ENCODE measurements at regions of chr5 and their contacts with region 1.

Region 1: GRCh38 chr5:50744776-50745175 is 78.3 kb downstream of the PARP8 start:
- DNase-seq: peak in 1 of 2 donors; percentile 54
- ATAC-seq: peak; percentile 68 to 73 (median 70)
- H3K4me3 ChIP-seq: peak overlapping the region; percentile 19
- H3K4me3 Mint-ChIP-seq: peak overlapping the region; percentile 85
- H3K27ac ChIP-seq: peak overlapping the region; percentile 59
- H3K27ac Mint-ChIP-seq: peak overlapping the region; percentile 75 to 86
- H3K4me1 ChIP-seq: peaks cover 12% of the 10 kb centered on the region
- H3K4me1 Mint-ChIP-seq: peaks cover 73 to 87% of the 10 kb centered on the region in 2 donors
- H3K27me3 ChIP-seq: no peaks in the 10 kb centered on the region
- H3K27me3 Mint-ChIP-seq: no peaks in the 10 kb centered on the region
- CTCF ChIP-seq: no peak

Region 2: GRCh38 chr5:50564079-50564478 is 180.7 kb before region 1 on chr5:
- intact Hi-C with region 1: loop called (anchors 10 kb)
- DNase-seq: peak in 1 of 2 donors; percentile 71
- ATAC-seq: peak; percentile 94 to 98 (median 94)
- H3K4me3 ChIP-seq: no peak overlapping the region
- H3K4me3 Mint-ChIP-seq: peak overlapping the region; percentile 64
- H3K27ac ChIP-seq: peak overlapping the region; percentile 85
- H3K27ac Mint-ChIP-seq: peak overlapping the region; percentile 84 to 86
- H3K4me1 ChIP-seq: peaks cover 4% of the 10 kb centered on the region
- H3K4me1 Mint-ChIP-seq: peaks cover 31 to 50% of the 10 kb centered on the region in 2 donors
- H3K27me3 ChIP-seq: no peaks in the 10 kb centered on the region
- H3K27me3 Mint-ChIP-seq: no peaks in the 10 kb centered on the region
- CTCF ChIP-seq: no peak

Region 3: DNA sequence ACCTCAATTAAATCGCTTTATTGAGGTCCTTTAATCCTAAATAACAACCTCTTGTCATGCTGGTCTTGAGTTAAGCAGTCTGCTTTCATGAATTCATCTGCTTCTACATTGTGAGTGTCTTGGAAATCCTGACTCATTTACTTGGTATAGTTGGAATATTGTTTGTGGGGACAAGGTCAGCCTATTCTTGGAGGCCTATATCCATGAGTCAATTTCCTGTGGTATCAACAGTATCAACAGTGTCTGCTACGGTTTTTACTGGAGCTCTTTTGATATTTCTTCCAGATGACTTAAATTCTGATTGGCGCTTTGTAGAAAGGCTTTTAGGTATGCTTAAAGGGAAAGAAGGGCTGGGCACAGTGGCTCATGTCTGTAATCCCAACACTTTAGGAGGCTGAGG is 149.6 kb before region 1 on chr5:
- intact Hi-C with region 1: loop called (anchors 5 kb)
- DNase-seq: no peak
- ATAC-seq: peak in 1 of 3 donors; percentile 44
- H3K4me3 ChIP-seq: no peak overlapping the region
- H3K4me3 Mint-ChIP-seq: peak overlapping the region; percentile 45
- H3K27ac ChIP-seq: peak overlapping the region; percentile 38
- H3K27ac Mint-ChIP-seq: peak overlapping the region; percentile 82 to 84
- H3K4me1 ChIP-seq: peaks cover 27% of the 10 kb centered on the region
- H3K4me1 Mint-ChIP-seq: peaks cover 73 to 75% of the 10 kb centered on the region in 2 donors
- H3K27me3 ChIP-seq: no peaks in the 10 kb centered on the region
- H3K27me3 Mint-ChIP-seq: no peaks in the 10 kb centered on the region
- CTCF ChIP-seq: no peak

Region 4: GRCh38 chr5:50667653-50668595 is 76.9 kb before region 1 on chr5:
- intact Hi-C with region 1: loop called (anchors 2 kb)
- DNase-seq: peak; percentile 87 to 94
- ATAC-seq: peak; percentile 68 to 80 (median 79)
- H3K4me3 ChIP-seq: peak overlapping the region; percentile 96
- H3K4me3 Mint-ChIP-seq: peak overlapping the region; percentile 96
- H3K27ac ChIP-seq: peak overlapping the region; percentile 99
- H3K27ac Mint-ChIP-seq: peak overlapping the region; percentile 99 to 100
- H3K4me1 ChIP-seq: peaks cover 27% of the 10 kb centered on the region
- H3K4me1 Mint-ChIP-seq: peaks cover 61 to 62% of the 10 kb centered on the region in 2 donors
- H3K27me3 ChIP-seq: no peaks in the 10 kb centered on the region
- H3K27me3 Mint-ChIP-seq: no peaks in the 10 kb centered on the region
- CTCF ChIP-seq: no peak

Region 5: DNA sequence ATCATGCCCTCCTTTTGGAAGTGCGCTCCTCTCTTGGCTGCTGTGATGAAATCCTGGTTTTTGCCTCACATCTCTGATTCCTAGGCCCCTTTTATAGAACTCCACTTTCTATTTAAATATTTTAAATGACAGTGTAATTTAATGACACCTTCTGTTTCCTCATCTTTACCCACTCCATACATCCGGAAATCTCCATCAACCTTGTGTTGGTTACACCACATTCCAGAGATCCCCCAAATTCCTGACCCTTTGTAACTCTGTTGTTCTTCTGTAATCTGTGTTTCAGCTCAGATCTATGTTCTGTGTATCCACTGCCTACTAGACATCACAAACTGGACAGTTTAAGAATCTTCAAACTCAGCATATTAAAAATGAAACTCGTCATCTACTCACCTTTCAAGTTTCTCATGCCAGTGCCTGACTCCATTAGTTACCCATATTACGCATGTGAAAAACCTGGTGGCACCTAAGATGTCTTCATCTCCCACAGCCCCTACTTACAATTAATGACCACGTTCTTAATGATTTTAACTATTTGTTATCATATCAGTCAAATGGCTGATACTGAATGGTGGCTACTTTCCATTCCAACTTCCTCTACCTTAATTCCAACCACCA is 53.3 kb before region 1 on chr5:
- intact Hi-C with region 1: no loop called
- DNase-seq: no peak
- ATAC-seq: no peak
- H3K4me3 ChIP-seq: no peak overlapping the region
- H3K4me3 Mint-ChIP-seq: no peak overlapping the region
- H3K27ac ChIP-seq: peak overlapping the region; percentile 35
- H3K27ac Mint-ChIP-seq: no peak overlapping the region
- H3K4me1 ChIP-seq: peaks cover 19% of the 10 kb centered on the region
- H3K4me1 Mint-ChIP-seq: peaks cover 35% of the 10 kb centered on the region in 2 donors
- H3K27me3 ChIP-seq: no peaks in the 10 kb centered on the region
- H3K27me3 Mint-ChIP-seq: no peaks in the 10 kb centered on the region
- CTCF ChIP-seq: no peak

Region 6: GRCh38 chr5:50711273-50711672 is 33.5 kb before region 1 on chr5:
- intact Hi-C with region 1: loop called (anchors 5 kb)
- DNase-seq: peak; percentile 31 to 88
- ATAC-seq: peak; percentile 85 to 92 (median 88)
- H3K4me3 ChIP-seq: peak overlapping the region; percentile 4
- H3K4me3 Mint-ChIP-seq: peak overlapping the region; percentile 73
- H3K27ac ChIP-seq: peak overlapping the region; percentile 72
- H3K27ac Mint-ChIP-seq: peak overlapping the region; percentile 90 to 91
- H3K4me1 ChIP-seq: peaks cover 28% of the 10 kb centered on the region
- H3K4me1 Mint-ChIP-seq: peaks cover 74 to 81% of the 10 kb centered on the region in 2 donors
- H3K27me3 ChIP-seq: no peaks in the 10 kb centered on the region
- H3K27me3 Mint-ChIP-seq: no peaks in the 10 kb centered on the region
- CTCF ChIP-seq: no peak

Region 7: GRCh38 chr5:50727149-50727496 is 17.7 kb before region 1 on chr5:
- intact Hi-C with region 1: loop called (anchors 2 kb)
- DNase-seq: peak in 1 of 2 donors; percentile 39
- ATAC-seq: peak in 2 of 3 donors; percentile 58 to 78
- H3K4me3 ChIP-seq: no peak overlapping the region
- H3K4me3 Mint-ChIP-seq: peak overlapping the region; percentile 65
- H3K27ac ChIP-seq: peak overlapping the region; percentile 0
- H3K27ac Mint-ChIP-seq: peak overlapping the region; percentile 81 to 82
- H3K4me1 ChIP-seq: peaks cover 16% of the 10 kb centered on the region
- H3K4me1 Mint-ChIP-seq: peaks cover 71 to 72% of the 10 kb centered on the region in 2 donors
- H3K27me3 ChIP-seq: no peaks in the 10 kb centered on the region
- H3K27me3 Mint-ChIP-seq: no peaks in the 10 kb centered on the region
- CTCF ChIP-seq: no peak